ENCODE measurements at regions of chr19 and their contacts with region 1.

Region 1: DNA sequence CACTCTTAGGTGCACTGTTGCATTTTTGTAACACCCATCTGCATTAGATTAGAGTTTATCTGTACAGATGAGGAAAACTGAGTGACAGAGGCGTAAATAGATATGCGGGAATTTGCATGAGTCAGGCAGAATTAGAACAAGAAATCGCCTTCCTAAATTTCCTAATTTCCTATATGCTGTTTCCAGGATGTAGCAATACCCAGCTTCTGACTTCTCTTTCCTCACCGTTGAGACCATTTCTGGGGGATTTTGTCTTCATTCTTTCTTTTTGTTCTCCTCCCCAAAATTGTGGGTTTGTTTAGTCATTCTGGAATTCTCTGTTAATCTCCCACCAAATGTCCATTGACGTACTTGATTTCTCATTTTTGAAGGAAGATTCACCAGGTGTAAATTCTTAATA is 10.6 kb upstream of the ZNF792 start:
- DNase-seq: no peak
- ATAC-seq: peak in 1 of 2 donors; percentile 15

Region 2: GRCh38 chr19:35013031-35013819 is 38.6 kb after region 1 on chr19:
- intact Hi-C with region 1: loop called (anchors 1 to 2 kb)
- DNase-seq: peak; percentile 85
- ATAC-seq: peak; percentile 72 to 76

Region 3: GRCh38 chr19:35090506-35091237 is 116.0 kb after region 1 on chr19:
- intact Hi-C with region 1: loop called (anchors 2 to 10 kb)
- DNase-seq: peak; percentile 51
- ATAC-seq: peak; percentile 90 to 94

Measured in left cardiac atrium (tissue), 4 donors.